ENCODE measurements at regions of chr4 and their contacts with region 1.

Region 1: DNA sequence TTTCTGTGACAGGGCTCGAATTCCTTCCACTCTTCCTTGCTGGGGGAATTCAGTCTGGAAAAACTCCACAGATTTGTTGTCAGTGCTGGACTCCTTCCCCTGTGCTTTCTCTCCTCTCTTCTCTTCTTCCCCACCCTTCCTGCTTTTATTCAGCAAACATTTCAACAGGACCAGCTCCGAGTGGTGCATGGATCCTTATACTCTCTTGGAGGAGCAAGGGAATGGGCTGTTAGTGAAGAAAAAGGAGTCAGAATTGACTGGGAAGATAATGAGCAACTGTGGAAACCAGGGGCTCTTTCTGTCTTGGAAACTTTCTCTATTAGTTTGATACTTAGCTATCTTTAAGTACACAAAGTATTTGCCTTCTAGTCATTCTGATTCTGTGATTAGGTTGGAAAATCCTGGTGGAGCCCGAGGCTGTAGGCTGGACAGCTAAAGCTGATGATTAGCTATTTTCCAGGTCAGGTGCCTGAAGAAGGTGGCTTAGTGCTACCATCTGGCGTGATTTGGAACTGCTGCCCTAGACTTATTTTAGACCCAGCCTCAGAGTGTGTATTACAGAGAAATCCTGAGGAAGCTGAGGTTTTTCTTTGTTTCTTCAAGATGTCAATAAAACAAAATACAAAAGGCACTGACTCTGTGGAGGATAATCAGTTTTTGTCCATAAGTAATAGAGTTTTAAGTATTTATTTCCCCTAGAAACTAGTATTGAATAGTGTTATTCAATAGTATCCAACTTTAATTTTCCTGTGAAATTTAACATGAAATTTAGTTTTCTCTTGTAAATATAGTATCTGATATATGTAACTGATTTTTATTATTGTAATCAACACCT is 38.4 kb downstream of the NAP1L5 start:
- DNase-seq: peak; percentile 69

Region 2: DNA sequence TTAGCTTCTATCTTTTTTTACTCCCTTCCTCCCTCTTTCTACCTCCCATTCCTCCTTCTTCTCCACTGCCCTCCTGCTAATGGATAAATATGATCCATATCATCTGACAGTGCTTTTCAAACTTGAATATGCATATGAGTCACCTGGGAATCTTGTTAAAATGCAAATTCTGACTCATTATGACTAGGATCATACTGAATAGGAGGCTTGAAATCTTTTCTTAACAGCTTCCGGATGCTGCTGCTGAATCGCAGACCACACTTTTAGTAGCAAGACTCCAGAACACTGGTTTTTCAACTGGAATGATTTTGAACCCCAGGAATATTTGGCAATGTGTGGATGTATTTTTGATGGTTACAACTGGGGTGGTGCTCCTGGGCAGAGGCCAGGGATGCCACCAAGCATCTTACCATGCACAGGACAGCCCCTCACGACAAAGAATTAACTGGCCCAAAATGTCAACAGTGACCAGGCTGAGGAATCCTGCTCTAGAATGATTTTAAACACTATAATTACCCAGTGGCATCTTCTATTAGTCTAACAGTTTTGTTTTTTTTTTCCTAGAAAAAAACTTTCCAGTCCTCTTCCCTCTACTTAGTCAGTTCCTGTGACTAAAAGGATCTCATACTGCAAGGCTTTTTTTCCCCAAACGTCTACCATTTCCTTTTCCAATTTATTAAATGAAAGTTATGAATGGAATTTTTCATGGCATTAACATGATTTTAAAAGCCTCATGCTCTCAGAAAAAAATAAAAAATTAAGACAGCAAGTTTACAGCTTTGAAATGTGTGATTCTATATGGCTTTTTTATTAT is 125.1 kb before region 1 on chr4:
- CTCF ChIA-PET with region 1: interaction called, 11 read pairs
- POLR2A ChIA-PET with region 1: no interaction called
- DNase-seq: no peak

Measured in HEK293T (cell line).